ENCODE measurements at regions of chr18 and their contacts with region 1.

Region 1: GRCh38 chr18:62663731-62664336 is 51.5 kb upstream of the PHLPP1 start:
- DNase-seq: peak in 1 of 2 donors; percentile 21
- ATAC-seq: peak; percentile 44 to 83 (median 68)
- H3K4me3 ChIP-seq: no peak overlapping the region
- H3K27ac ChIP-seq: no peak overlapping the region
- H3K4me1 ChIP-seq: peaks cover 0 to 9% (median 0%) of the 10 kb centered on the region in 9 donors
- H3K27me3 ChIP-seq: no peaks in the 10 kb centered on the region
- CTCF ChIP-seq: no peak

Region 2: DNA sequence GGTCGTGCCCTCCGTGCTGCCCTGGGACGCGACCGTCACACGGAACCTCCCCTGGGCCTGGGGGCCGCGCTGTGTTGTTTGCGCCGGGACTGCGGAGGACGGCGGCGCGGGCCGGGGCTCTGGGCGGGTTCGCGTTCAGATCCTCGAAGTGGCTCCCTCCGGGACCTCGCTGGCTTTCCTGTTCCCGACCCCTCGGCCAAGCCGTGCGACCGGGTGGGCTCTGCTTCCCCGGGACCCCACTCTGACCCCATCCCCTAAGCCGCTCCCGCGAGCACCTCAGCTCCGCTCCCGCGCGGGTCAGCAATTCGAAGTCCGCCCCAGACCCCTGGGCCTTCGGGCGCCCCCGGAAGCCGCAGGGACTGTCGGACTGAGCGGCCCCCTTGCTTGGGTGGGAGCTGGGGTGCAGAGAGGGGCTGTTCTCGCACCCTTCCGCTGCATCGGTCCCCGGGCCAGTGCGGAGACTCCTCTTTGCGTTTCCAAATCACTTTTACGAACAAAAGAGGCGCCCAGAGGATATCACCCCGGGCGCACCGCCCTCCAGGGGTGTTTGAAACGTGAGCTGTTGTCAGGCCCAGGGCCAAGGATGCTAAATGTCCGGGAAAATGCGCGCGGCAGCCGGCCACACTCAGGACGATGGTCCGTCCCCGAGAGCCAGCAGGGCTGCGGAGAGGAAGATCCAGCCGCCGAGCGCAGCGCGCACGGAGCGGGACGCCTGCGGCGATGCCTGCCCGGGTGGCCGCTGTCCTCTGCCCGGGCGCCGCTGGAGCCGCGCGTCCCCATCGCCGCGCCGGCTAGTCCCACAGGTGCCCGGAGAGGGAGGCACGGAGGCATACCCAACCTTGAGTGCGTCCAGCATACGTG is 67.5 kb before region 1 on chr18:
- intact Hi-C with region 1: loop called in 2 of 10 experiments (anchors 10 kb)
- DNase-seq: peak in 1 of 2 donors; percentile 23
- ATAC-seq: peak; percentile 67 to 83 (median 73)
- H3K4me3 ChIP-seq: peak overlapping the region; percentile 5 to 61 (median 50)
- H3K27ac ChIP-seq: peak overlapping the region in 4 of 10 donors; percentile 10 to 51 (median 42)
- H3K4me1 ChIP-seq: peaks cover 6 to 24% (median 19%) of the 10 kb centered on the region in 9 donors
- H3K27me3 ChIP-seq: peaks cover 0 to 53% (median 41%) of the 10 kb centered on the region in 7 donors
- CTCF ChIP-seq: no peak

Region 3: GRCh38 chr18:62751341-62751821 is 87.5 kb after region 1 on chr18:
- intact Hi-C with region 1: no loop called
- DNase-seq: peak in 1 of 2 donors; percentile 67
- ATAC-seq: peak; percentile 71 to 91 (median 81)
- H3K4me3 ChIP-seq: no peak overlapping the region
- H3K27ac ChIP-seq: peak overlapping the region in 6 of 10 donors; percentile 13 to 51 (median 34)
- H3K4me1 ChIP-seq: peaks cover 3 to 37% (median 25%) of the 10 kb centered on the region in 9 donors
- H3K27me3 ChIP-seq: no peaks in the 10 kb centered on the region
- CTCF ChIP-seq: no peak